Left ventricle myocardium superior (tissue), 1 donor: ENCODE measurements at regions of chr5 and their contacts with region 1.

Region 1: DNA sequence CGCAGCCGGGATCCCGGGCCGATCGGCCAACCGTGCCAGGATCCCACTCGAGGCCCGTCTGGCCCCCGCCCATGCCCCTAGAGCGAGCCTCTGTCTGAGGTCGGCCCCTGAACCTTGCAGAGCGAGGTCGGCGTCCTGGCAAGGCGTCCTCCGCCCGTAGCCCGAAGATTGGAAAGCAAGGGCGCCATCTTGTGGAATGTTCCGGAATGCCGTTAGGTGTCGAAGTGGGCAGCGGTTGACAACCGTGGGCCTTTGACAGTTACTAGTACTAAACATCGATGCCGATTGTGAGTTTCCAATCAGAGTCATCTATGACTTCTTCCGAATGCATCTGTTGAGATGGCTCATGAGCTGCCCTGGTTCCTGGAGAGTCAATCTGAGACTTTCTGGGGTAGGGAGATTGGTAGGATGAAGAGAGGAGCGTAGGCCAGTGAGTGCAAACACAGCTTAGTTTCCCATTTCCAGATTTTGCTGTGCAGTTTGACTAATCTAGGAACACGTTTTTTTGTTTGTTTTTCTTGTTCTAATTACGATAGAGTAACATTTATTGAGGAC is 923 bp upstream of the PLK2 start:
- DNase-seq: peak; percentile 94
- ATAC-seq: peak; percentile 81

Region 2: GRCh38 chr5:57298295-57298984 is 1162.4 kb before region 1 on chr5:
- intact Hi-C with region 1: loop called (anchors 5 kb)
- DNase-seq: peak; percentile 58
- ATAC-seq: peak; percentile 95

Region 3: GRCh38 chr5:57499262-57500050 is 961.4 kb before region 1 on chr5:
- intact Hi-C with region 1: loop called (anchors 5 kb)
- DNase-seq: no peak
- ATAC-seq: peak; percentile 64

Region 4: GRCh38 chr5:57779383-57780223 is 681.2 kb before region 1 on chr5:
- intact Hi-C with region 1: loop called (anchors 5 kb)
- DNase-seq: no peak
- ATAC-seq: peak; percentile 87

Region 5: DNA sequence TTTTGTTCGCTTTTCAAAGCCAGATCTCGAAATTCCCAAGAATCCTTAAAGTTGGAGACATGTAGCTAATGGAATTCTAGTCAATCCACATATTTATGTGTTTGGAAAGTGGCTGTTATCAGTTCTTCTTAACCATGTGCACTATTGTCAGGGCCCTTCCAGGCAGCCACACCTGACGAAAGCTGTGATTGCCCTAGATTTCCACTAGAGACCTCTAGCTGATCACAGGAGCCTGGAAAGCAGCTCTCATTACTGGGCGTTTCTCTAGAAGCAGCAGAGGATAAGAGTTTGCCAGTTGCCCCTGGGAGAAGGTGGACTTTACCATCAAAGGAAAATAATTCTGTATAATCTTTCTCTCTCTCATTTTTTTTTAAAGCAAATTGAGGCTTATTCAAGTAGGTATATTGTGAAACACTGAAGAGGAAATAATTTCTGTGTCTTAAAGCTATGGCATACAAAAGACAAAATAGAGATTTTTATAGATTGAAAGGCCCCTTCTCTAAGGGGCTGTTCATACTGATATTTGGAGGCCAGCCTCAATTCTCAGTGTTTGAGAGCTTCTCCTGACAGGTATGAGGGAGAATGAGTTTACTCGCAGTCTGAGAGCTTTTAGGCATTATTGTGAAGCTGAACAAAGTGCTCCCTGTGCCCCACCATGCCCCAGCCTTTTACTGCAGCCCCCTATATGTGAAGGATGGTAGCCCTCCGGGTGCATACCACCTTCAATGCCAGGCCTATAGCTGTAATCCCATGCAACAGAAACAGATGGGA is 572.8 kb before region 1 on chr5:
- intact Hi-C with region 1: loop called (anchors 5 kb)
- DNase-seq: peak; percentile 30
- ATAC-seq: peak; percentile 95

Region 6: DNA sequence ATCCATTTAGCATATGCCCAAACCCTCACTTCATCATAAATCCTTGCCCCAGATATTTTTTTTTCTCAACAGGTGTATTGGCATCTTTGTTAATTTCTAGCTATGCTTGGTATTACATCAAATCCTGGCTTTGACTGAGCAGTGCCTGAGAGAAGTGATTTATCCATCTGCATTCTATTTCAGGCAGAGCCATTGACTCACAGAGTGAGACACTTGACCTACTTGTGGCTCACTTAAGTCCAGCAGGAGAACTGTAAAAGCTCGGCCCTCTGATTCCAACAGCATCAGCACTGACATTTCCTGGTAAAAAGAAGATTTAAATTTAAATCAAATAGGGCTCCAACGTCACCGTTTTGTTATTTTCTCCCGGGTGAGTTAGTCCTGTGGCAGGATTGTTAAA is 94.3 kb before region 1 on chr5:
- intact Hi-C with region 1: loop called (anchors 10 kb)
- DNase-seq: no peak
- ATAC-seq: peak; percentile 85

Region 7: GRCh38 chr5:58517198-58517597 is 56.4 kb after region 1 on chr5:
- intact Hi-C with region 1: no loop called
- DNase-seq: no peak
- ATAC-seq: no peak